Caco-2 (cell line): ENCODE measurements at regions of chr5 and their contacts with region 1.

Region 1: DNA sequence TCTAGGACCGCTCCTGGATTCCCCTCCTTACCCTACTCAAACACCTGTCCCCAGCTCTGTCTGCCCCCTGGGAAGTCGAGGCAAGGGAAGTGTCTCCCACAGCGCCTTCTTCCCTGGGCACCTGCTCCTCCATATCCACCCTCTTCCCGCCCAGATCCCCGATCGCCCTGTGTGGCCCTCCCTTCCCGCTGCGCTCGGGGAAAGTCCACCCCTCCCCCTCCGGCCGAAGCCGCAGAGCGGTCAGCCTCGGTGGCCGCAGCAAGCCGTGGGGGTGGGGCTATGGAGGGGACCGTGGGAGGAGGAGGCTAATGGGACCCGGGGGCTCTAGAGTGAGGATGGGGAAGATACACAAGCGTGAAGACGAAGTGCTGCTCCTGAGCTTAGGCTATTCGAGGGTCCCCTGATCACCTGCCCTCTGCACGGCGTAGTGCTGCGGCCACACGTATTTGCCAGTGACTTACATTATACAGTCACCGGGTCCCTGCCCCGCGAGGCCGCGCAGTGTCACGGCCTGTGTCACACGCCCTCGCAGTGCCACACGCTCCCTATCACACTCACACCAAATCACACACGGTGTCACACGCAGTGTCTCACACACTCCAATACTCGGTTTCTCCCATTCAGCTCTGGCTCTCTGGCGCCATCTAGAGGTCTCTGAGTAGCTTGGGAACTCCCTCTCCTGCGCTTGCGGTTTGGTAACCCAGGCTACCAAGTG is 658 bp upstream of the PCDH1 start:
- DNase-seq: peak; percentile 87 to 88
- H3K4me3 ChIP-seq: peak overlapping the region; percentile 43
- H3K4me3 Mint-ChIP-seq: peak overlapping the region; percentile 77
- H3K27ac Mint-ChIP-seq: no peak overlapping the region
- H3K4me1 ChIP-seq: peaks cover 34% of the 10 kb centered on the region
- H3K4me1 Mint-ChIP-seq: peaks cover 31% of the 10 kb centered on the region
- H3K27me3 ChIP-seq: peaks cover 5% of the 10 kb centered on the region
- H3K27me3 Mint-ChIP-seq: peaks cover 26% of the 10 kb centered on the region
- CTCF ChIP-seq: peak; percentile 93 to 95

Region 2: DNA sequence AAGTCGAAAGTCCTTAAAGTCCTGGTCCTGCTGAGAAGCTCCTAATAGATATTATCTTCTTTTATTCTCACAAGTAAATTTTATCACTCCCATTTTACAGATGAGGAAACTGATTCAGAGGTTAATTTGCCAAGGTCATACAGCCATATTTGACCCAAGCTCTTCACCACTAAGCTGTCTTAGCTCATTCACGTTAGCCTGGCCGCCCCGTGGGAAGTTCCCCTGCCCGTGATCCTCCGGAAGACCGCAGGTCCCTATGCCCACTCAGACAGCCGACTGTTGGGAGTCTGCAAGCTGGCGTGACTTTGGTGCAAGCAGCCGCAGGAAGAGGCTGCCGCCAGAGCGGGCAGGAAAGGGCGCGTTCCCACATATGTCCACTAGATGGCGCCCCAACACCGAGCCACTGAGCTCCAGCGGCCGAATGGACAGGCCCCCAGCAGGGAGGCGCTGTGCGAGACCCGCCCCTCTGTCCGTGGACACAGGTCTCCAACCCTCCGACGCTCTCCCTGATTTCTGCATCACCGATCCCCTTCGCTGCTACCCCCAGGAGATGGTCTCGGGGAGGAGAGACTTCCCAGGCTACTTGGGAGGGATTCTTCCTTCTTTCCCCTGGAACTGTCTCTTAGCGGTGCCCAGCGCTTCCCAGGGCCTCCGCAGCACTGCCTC is 186.9 kb before region 1 on chr5:
- CTCF ChIA-PET with region 1: interaction called, 44 read pairs
- POLR2A ChIA-PET with region 1: no interaction called
- intact Hi-C with region 1: loop called (anchors 1 kb)
- DNase-seq: peak; percentile 81 to 92
- H3K4me3 ChIP-seq: peak overlapping the region; percentile 39
- H3K4me3 Mint-ChIP-seq: peak overlapping the region; percentile 71
- H3K27ac Mint-ChIP-seq: no peak overlapping the region
- H3K4me1 ChIP-seq: no peaks in the 10 kb centered on the region
- H3K4me1 Mint-ChIP-seq: no peaks in the 10 kb centered on the region
- H3K27me3 ChIP-seq: no peaks in the 10 kb centered on the region; the same call in 1 of the 2 replicates
- H3K27me3 Mint-ChIP-seq: peaks cover 7% of the 10 kb centered on the region
- CTCF ChIP-seq: peak; percentile 88 to 97

Region 3: DNA sequence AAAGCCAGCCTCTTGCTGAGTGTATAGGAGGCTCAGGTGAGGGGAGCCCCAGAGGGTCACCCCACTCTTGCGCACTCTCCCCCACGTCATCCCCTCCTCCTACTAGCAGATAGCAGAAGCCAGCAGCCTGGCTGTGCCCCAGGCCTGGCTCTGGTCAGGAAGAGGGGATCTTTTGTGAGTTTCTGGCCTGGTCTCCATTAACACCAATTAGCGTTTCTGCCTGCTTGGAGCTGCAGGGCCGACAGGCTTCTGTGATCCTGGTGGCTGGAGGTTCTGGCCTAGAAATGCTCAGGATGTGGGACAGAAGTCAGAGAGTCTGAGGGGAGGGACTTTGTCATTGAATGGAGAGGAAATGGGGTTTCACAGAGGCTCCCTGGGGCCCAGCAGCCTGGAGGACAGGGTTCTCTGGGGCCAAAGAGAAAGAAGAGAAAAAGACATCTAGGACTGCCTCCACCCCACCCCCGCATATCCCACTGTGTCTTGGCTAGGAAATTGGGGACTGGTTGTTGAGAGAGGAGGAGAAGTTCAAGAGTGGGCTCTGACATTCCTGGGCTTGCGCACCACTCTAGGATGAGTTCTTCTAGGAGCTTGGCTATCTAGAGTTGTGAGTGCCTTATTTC is 149.4 kb before region 1 on chr5:
- CTCF ChIA-PET with region 1: no interaction called
- POLR2A ChIA-PET with region 1: interaction called, 12 read pairs
- intact Hi-C with region 1: no loop called
- DNase-seq: no peak
- H3K4me3 ChIP-seq: no peak overlapping the region
- H3K4me3 Mint-ChIP-seq: no peak overlapping the region
- H3K27ac Mint-ChIP-seq: no peak overlapping the region
- H3K4me1 ChIP-seq: 0 out of 2 replicates have a peak, but pooled peaks cover 6% of the 10 kb centered on the region
- H3K4me1 Mint-ChIP-seq: peaks cover 5% of the 10 kb centered on the region
- H3K27me3 ChIP-seq: no peaks in the 10 kb centered on the region
- H3K27me3 Mint-ChIP-seq: peaks cover 4% of the 10 kb centered on the region
- CTCF ChIP-seq: no peak

Region 4: GRCh38 chr5:141762790-141763368 is 116.0 kb before region 1 on chr5:
- CTCF ChIA-PET with region 1: interaction called, 54 read pairs
- POLR2A ChIA-PET with region 1: no interaction called
- intact Hi-C with region 1: loop called (anchors 2 kb)
- DNase-seq: no peak
- H3K4me3 ChIP-seq: no peak overlapping the region
- H3K4me3 Mint-ChIP-seq: no peak overlapping the region
- H3K27ac Mint-ChIP-seq: no peak overlapping the region
- H3K4me1 ChIP-seq: peaks cover 7% of the 10 kb centered on the region
- H3K4me1 Mint-ChIP-seq: peaks cover 8% of the 10 kb centered on the region
- H3K27me3 ChIP-seq: no peaks in the 10 kb centered on the region
- H3K27me3 Mint-ChIP-seq: peaks cover 14% of the 10 kb centered on the region
- CTCF ChIP-seq: no peak

Region 5: DNA sequence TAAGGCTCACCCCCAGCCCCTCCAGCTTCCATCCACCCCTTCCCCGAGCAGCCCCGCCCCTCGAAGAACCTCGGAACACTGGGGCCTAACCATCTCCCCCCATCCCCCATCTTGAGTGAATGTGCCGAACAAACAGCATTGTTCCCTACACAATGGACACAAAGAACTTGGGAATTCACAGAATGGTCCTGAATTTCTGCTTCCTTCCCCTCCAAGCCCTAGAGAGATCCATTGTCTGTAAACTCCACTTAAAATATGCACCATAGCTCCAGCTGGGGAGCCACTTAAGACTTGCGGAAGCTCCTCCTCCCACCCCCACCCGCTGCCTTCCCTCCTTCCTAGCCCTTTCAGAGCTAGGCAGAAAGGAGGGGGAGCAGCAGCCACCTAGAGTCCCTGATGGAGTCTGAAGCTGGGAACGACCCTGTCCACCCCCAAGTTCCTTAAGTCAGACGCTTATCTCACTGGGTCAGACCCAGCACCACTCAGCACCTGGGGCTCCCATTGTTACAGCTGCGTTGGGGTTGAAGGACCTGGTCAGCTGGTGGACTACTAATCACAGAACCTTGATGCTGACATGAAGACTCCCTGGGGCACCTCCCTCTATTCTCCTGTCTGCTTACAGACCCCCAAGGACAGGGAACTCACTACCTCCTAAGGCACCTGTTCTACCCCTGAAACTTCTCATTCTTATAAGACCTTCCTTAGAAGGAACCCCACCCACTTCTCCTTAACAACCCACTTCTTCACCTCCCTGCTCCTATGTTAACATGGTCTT is 62.1 kb before region 1 on chr5:
- CTCF ChIA-PET with region 1: interaction called, 10 read pairs
- POLR2A ChIA-PET with region 1: no interaction called
- intact Hi-C with region 1: loop called (anchors 1 kb)
- DNase-seq: no peak
- H3K4me3 ChIP-seq: no peak overlapping the region
- H3K4me3 Mint-ChIP-seq: no peak overlapping the region
- H3K27ac Mint-ChIP-seq: no peak overlapping the region
- H3K4me1 ChIP-seq: no peaks in the 10 kb centered on the region
- H3K4me1 Mint-ChIP-seq: no peaks in the 10 kb centered on the region
- H3K27me3 ChIP-seq: peaks cover 1% of the 10 kb centered on the region; the same call in 1 of the 2 replicates
- H3K27me3 Mint-ChIP-seq: peaks cover 5% of the 10 kb centered on the region
- CTCF ChIP-seq: no peak

Region 6: GRCh38 chr5:141849375-141850243 is 29.3 kb before region 1 on chr5:
- CTCF ChIA-PET with region 1: interaction called, 13 read pairs
- POLR2A ChIA-PET with region 1: interaction called, 4 read pairs
- intact Hi-C with region 1: loop called (anchors 1 kb)
- DNase-seq: peak; percentile 94 to 95
- H3K4me3 ChIP-seq: peak overlapping the region; percentile 79
- H3K4me3 Mint-ChIP-seq: peak overlapping the region; percentile 79
- H3K27ac Mint-ChIP-seq: peak overlapping the region; percentile 69
- H3K4me1 ChIP-seq: peaks cover 30% of the 10 kb centered on the region
- H3K4me1 Mint-ChIP-seq: peaks cover 24% of the 10 kb centered on the region
- H3K27me3 ChIP-seq: no peaks in the 10 kb centered on the region
- H3K27me3 Mint-ChIP-seq: no peaks in the 10 kb centered on the region
- CTCF ChIP-seq: no peak